ENCODE measurements at regions of chr1 and their contacts with region 1.

Region 1: GRCh38 chr1:152654110-152654509 is 9.1 kb upstream of the LCE2D start:
- H3K4me3 Mint-ChIP-seq: no peak overlapping the region
- H3K27ac Mint-ChIP-seq: no peak overlapping the region
- H3K4me1 Mint-ChIP-seq: peaks cover 8% of the 10 kb centered on the region
- H3K27me3 Mint-ChIP-seq: peaks cover 15% of the 10 kb centered on the region

Region 2: GRCh38 chr1:153220606-153221303 is 566.6 kb after region 1 on chr1:
- intact Hi-C with region 1: loop called (anchors 10 kb)
- H3K4me3 Mint-ChIP-seq: no peak overlapping the region
- H3K27ac Mint-ChIP-seq: no peak overlapping the region
- H3K4me1 Mint-ChIP-seq: peaks cover 5% of the 10 kb centered on the region
- H3K27me3 Mint-ChIP-seq: peaks cover 10% of the 10 kb centered on the region

Measured in dendritic cell treated with granulocyte-macrophage colony-stimulating factor and Interleukin-4, amounts not matched to agents 40 ng/mL and 50 ng/mL, for 4 days (primary cell).